Calu3 (cell line): ENCODE measurements at regions of chr16 and their contacts with region 1.

Region 1: DNA sequence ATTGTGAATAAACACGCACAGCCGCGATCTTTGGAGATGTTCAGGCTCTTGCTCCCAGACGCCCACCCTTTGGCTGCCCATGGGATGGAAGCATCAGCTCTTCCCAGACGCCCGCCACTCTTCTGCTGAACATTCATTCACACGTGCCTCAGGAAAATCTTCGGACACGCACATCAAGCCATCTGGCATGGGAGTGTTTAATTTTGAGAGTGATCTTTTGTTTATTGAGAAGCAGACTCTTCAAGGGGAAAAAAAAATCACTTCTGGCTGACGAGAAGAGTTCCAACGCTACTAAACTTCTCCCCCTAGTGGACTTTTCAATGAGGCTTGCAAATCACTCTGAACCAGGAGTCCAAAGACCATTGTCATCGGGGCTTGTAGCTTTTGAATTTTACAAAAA is 62.0 kb upstream of the NUDT7 start:
- DNase-seq: peak; percentile 6
- H3K4me3 Mint-ChIP-seq: no peak overlapping the region
- H3K27ac Mint-ChIP-seq: no peak overlapping the region
- H3K4me1 Mint-ChIP-seq: no peaks in the 10 kb centered on the region
- H3K27me3 Mint-ChIP-seq: peaks cover 17% of the 10 kb centered on the region
- CTCF ChIP-seq: peak; percentile 34

Region 2: GRCh38 chr16:77584205-77584859 is 76.0 kb before region 1 on chr16:
- CTCF ChIA-PET with region 1: no interaction called
- intact Hi-C with region 1: loop called (anchors 1 kb)
- DNase-seq: peak; percentile 61
- H3K4me3 Mint-ChIP-seq: no peak overlapping the region
- H3K27ac Mint-ChIP-seq: no peak overlapping the region
- H3K4me1 Mint-ChIP-seq: no peaks in the 10 kb centered on the region
- H3K27me3 Mint-ChIP-seq: peaks cover 65% of the 10 kb centered on the region
- CTCF ChIP-seq: peak; percentile 87

Region 3: GRCh38 chr16:77974893-77975292 is 314.6 kb after region 1 on chr16:
- CTCF ChIA-PET with region 1: no interaction called
- intact Hi-C with region 1: no loop called
- DNase-seq: peak; percentile 15
- H3K4me3 Mint-ChIP-seq: no peak overlapping the region
- H3K27ac Mint-ChIP-seq: no peak overlapping the region
- H3K4me1 Mint-ChIP-seq: no peaks in the 10 kb centered on the region
- H3K27me3 Mint-ChIP-seq: peaks cover 39% of the 10 kb centered on the region
- CTCF ChIP-seq: no peak